Gastrocnemius medialis (tissue), 4 donors: ENCODE measurements at regions of chr9 and their contacts with region 1.

Region 1: GRCh38 chr9:129884220-129885017 is 49.2 kb downstream of the USP20 start:
- DNase-seq: peak; percentile 62 to 76
- ATAC-seq: peak; percentile 61 to 64
- H3K4me3 ChIP-seq: peak overlapping the region in 3 of 4 donors; percentile 44 to 51 (median 50)
- H3K27ac ChIP-seq: peak overlapping the region; percentile 64 to 70 (median 67)
- H3K4me1 ChIP-seq: peaks cover 21 to 26% of the 10 kb centered on the region in 2 donors
- H3K27me3 ChIP-seq: no peaks in the 10 kb centered on the region
- CTCF ChIP-seq: no peak
- POLR2A ChIP-seq: no peak

Region 2: DNA sequence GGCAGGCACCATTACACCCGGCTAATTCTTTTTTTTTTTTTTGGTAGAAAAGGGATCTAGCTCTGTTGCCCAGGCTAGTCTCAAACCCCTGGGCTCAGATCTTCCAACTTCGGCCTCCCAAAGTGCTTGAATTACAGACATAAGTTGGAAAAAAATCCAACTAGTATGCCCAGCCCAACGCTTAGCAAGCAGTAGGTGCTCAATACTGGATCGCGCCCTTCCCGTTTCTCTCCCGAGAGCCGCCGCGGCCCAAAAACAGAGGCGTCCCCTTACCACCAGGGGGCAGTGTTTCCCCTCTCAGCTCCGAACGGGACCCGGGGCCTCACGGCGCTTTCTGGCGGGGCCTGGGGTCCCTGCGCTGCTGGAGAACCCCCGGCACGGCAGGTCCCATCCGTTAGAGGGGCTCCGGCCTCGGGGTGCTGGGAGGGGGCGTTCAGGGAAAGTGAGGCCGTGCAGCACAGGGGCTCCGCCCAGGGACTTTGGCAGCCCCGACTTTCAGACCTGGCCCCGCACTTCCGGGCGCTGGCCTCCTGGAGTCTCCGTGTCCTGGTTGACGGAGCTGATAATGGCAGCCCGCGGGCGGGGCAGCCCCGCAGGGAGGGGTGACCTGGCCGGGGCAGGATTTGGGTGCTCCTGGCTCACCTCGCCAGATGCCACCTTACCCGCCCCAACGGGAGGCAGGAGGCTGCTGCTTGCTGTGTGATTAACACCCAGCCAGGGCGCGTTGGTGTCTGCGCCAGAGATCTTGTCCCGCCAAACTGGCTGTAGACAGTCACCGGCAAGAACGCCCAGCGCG is 146.7 kb before region 1 on chr9:
- in situ Hi-C with region 1: no loop called
- intact Hi-C with region 1: no loop called
- DNase-seq: peak; percentile 59 to 64
- ATAC-seq: peak; percentile 91 to 93
- H3K4me3 ChIP-seq: peak overlapping the region; percentile 63 to 89 (median 68)
- H3K27ac ChIP-seq: peak overlapping the region; percentile 49 to 71 (median 57)
- H3K4me1 ChIP-seq: no peaks in the 10 kb centered on the region
- H3K27me3 ChIP-seq: peaks cover 0 to 3% (median 0%) of the 10 kb centered on the region in 3 donors
- CTCF ChIP-seq: peak; percentile 93 to 98 (median 95)
- POLR2A ChIP-seq: no peak

Region 3: DNA sequence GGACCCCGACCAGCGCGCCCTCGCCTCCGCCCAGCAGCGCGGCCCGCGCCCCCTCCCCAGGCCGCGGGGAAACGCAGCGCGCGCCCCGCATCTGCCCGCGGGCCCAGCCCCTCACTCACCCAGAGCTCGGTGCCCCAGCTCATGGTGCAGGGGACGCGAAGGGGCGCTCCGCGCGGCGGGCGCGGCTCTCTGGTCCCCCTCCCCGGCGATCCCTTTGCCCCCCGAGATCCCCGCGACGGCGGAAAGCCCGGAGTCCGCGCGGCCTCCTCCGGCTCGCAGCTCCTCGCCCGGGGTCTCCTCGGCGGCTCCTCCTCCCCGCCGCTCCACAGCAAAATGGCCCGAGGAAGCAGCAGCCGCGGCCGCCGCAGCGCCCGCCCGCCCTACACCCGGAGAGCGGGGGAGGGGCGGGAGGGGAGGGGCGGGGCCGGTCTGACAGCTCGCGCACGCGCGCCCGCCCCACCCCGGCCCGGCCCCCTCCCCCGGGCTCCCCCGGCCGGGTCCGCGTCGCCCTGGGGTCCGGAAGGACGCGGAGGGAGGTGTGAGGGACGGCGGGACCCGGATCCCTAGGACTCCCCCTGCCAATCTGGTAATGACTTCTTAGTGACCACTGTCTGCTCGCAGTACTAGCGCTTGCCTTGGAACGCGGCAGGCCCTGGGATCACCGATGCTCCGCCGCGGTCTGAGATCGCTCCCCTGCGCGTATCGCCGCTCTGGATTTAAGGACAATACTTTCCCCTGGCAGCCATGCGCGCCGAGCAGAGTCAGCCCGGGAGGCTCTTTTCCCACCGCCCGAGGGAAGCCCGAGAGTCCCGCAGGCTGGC is 158.6 kb after region 1 on chr9 and contains the start of gene FNBP1:
- in situ Hi-C with region 1: no loop called
- intact Hi-C with region 1: loop called (anchors 1 kb)
- DNase-seq: peak; percentile 66 to 72
- ATAC-seq: peak; percentile 88 to 90
- H3K4me3 ChIP-seq: peak within 1 kb of the TSS; percentile 85 to 94 (median 90)
- H3K27ac ChIP-seq: peak within 1 kb of the TSS; percentile 92 to 98 (median 94)
- H3K4me1 ChIP-seq: peaks cover 20 to 23% of the 10 kb centered on the region in 2 donors
- H3K27me3 ChIP-seq: no peaks in the 10 kb centered on the region
- CTCF ChIP-seq: no peak
- POLR2A ChIP-seq: peak; percentile 90 to 93
- total RNA-seq, gene FNBP1: 13.3 to 30.0 (median 17.9) TPM

Region 4: DNA sequence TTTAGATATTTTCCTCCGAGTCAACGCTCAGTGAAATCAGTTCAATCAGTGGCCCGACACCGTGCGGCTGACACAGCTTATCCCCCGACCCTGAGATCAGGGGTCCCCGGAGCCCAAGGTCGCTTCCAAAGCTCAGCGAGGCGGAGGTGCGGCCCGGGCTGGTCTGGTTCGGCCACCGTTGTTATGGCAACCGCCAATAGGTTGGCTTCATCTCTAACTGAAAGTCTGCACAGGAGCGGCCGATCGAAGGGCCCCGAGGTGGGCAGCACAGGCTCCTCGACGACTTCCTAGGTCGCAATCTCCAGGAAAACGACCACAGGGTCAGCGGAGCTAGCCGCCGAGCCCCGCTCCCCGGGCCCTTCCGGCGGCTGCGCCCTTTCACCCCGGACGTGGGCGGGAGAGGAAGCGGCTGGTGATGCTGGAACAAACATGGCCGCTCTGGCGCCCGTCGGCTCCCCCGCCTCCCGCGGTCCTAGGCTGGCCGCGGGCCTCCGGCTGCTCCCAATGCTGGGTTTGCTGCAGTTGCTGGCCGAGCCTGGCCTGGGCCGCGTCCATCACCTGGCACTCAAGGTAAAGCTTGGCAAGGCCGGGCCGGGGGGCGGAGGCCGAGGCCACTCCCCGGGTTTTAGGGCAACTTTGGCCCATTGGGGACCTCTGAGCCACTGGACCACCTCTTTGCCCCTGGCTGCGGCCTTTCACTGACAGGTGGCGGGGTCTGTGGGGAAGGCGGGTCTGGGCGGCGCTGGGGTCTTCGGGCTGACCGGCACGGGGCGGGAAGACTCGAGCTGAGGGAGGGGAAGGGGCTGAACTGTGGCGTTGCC is 169.3 kb after region 1 on chr9 and contains the start of gene GPR107:
- in situ Hi-C with region 1: loop called in 3 of 4 experiments (anchors 10 to 25 kb)
- intact Hi-C with region 1: no loop called
- DNase-seq: peak; percentile 55 to 61
- ATAC-seq: peak; percentile 92 to 97
- H3K4me3 ChIP-seq: peak within 1 kb of the TSS; percentile 84 to 100 (median 97)
- H3K27ac ChIP-seq: peak within 1 kb of the TSS; percentile 86 to 93 (median 91)
- H3K4me1 ChIP-seq: peaks cover 24 to 25% of the 10 kb centered on the region in 2 donors
- H3K27me3 ChIP-seq: no peaks in the 10 kb centered on the region
- CTCF ChIP-seq: no peak
- POLR2A ChIP-seq: peak; percentile 76 to 78
- total RNA-seq, gene GPR107: 13.5 to 20.7 (median 17.5) TPM

Region 5: GRCh38 chr9:130078547-130078946 is 194.1 kb after region 1 on chr9:
- in situ Hi-C with region 1: loop called in 2 of 4 experiments (anchors 25 kb)
- intact Hi-C with region 1: no loop called
- DNase-seq: no peak
- ATAC-seq: no peak
- H3K4me3 ChIP-seq: no peak overlapping the region
- H3K27ac ChIP-seq: no peak overlapping the region
- H3K4me1 ChIP-seq: peaks cover 2 to 10% of the 10 kb centered on the region in 2 donors
- H3K27me3 ChIP-seq: no peaks in the 10 kb centered on the region
- CTCF ChIP-seq: no peak
- POLR2A ChIP-seq: no peak

Region 6: DNA sequence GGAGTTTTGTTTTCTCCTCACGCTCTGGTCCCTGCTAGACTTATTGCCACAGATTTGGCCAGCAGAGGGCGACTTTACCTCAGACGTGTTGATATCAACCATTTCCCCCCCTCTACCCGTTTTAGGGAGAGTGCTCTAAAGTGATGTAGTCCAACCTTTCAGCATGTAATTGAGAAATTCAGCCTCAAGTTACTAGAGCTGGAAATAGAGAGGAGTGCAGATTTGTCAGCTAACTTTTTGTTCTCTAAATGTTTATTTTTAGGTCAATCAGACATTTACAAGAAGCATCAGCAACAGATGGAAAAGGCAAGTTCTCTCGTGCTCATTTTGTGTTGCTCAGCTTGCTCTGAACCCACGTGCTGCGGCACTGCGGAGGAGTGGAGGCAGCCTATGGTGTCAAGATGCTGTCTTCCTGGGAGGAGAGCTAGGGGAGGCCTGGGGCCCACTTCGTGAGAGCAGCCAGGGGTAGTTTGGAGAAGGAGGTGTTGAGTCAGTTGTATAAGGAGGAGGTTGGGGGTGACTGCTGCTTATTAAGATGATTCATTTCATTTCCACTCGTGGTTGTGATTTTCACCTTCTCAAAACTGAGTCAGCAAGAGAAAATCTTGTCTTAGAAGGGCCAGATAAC is 222.9 kb after region 1 on chr9:
- in situ Hi-C with region 1: no loop called
- intact Hi-C with region 1: loop called (anchors 2 kb)
- DNase-seq: peak; percentile 40 to 68
- ATAC-seq: peak; percentile 69 to 83
- H3K4me3 ChIP-seq: no peak overlapping the region
- H3K27ac ChIP-seq: no peak overlapping the region
- H3K4me1 ChIP-seq: peaks cover 0 to 10% of the 10 kb centered on the region in 2 donors
- H3K27me3 ChIP-seq: no peaks in the 10 kb centered on the region
- CTCF ChIP-seq: peak; percentile 66 to 83 (median 78)
- POLR2A ChIP-seq: no peak

Region 7: DNA sequence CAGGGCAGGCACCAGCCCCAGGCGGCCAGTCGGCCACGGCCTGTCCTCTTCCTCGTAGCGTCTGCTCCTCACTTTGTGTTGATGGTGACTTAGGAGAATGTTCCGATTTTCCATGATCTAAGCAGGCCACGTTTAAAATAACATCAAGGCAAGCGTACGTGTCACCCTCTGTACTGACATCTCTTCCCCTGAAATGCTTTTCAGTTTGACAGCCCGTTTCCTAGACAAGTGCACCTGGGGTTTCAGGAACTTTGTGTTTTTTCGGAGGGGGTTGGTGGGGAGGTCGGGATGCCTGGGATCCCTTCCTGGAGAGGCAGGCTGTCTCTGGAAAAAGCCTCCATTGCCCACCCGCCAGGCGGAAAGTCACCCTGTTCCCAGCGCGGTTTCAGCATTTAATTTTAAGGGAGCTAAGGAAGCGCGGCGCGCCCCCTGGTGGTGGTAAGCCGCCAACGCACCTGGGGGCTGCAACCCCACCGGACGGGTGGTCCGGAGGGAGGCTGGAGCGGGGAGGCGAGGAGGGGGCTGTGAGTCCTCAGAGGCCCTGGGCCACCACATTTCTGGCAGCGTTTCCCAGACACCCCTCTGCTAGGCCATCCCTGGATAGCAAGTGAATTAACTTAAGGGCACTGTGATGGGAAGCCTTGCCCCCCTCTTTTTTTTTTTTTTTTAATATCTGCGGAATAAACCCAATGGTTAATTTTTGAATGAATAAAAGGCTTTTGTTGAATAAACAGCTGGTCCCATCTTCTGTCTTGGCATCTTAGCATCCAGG is 351.7 kb after region 1 on chr9:
- in situ Hi-C with region 1: loop called (anchors 25 kb)
- intact Hi-C with region 1: loop called (anchors 2 kb)
- DNase-seq: peak in 1 of 2 donors; percentile 44
- ATAC-seq: peak; percentile 25 to 48
- H3K4me3 ChIP-seq: peak overlapping the region in 1 of 4 donors; percentile 17
- H3K27ac ChIP-seq: no peak overlapping the region
- H3K4me1 ChIP-seq: no peaks in the 10 kb centered on the region
- H3K27me3 ChIP-seq: no peaks in the 10 kb centered on the region
- CTCF ChIP-seq: peak; percentile 96 to 100 (median 97)
- POLR2A ChIP-seq: no peak

Region 8: DNA sequence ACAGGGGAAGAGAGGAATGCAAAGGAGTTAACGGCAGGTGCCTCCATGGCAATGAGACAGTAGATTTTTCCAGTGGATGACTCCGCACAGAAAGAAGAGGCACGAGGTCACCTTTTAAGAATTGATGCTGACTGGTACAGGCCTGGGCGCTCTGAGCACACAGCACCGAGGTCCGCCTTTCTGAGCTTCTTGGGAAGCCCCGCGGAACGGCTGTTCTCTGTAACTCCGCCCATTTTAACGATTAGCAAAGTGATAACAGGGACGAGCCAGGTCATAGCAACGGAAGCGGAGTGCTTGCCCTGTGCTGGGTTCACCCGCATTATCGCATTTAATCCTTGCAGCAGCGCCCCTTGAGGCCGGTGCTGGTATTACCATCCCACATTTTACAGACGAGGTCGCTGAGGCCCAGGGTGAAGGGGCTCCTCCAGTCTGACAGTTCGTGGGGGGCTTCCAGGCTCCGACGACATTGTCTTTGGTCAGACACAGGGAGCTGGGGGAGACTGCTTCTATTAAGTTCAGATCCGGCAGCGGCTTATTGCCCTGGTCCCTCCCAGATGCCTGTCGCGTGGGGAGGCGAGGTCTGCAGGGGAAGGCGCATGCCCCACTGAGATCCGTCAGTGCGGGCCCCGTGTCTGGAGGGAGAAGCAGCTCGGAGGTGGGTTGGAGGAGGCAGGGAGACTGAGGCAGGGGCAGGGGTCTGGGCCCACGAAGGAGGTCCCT is 358.8 kb after region 1 on chr9:
- in situ Hi-C with region 1: loop called (anchors 25 kb)
- intact Hi-C with region 1: no loop called
- DNase-seq: peak in 1 of 2 donors; percentile 48
- ATAC-seq: peak; percentile 63 to 77
- H3K4me3 ChIP-seq: no peak overlapping the region
- H3K27ac ChIP-seq: no peak overlapping the region
- H3K4me1 ChIP-seq: no peaks in the 10 kb centered on the region
- H3K27me3 ChIP-seq: no peaks in the 10 kb centered on the region
- CTCF ChIP-seq: peak; percentile 76 to 93 (median 87)
- POLR2A ChIP-seq: no peak